Adrenal gland (tissue), 19 donors: ENCODE measurements at regions of chr11 and their contacts with region 1.

Region 1: GRCh38 chr11:32792948-32793475 is 1.4 kb downstream of the CCDC73 start:
- DNase-seq: peak; percentile 25 to 83 (median 53)
- H3K4me3 ChIP-seq: peak overlapping the region in 1 of 4 donors; percentile 37
- H3K27ac ChIP-seq: no peak overlapping the region
- H3K4me1 ChIP-seq: peaks cover 0 to 7% of the 10 kb centered on the region in 2 donors
- H3K27me3 ChIP-seq: no peaks in the 10 kb centered on the region
- CTCF ChIP-seq: peak; percentile 63 to 81 (median 72)
- POLR2A ChIP-seq: no peak

Region 2: GRCh38 chr11:32323814-32324130 is 469.2 kb before region 1 on chr11:
- intact Hi-C with region 1: loop called in 1 of 2 experiments (anchors 5 kb)
- DNase-seq: no peak
- H3K4me3 ChIP-seq: no peak overlapping the region
- H3K27ac ChIP-seq: no peak overlapping the region
- H3K4me1 ChIP-seq: no peaks in the 10 kb centered on the region
- H3K27me3 ChIP-seq: peaks cover 4% of the 10 kb centered on the region
- CTCF ChIP-seq: no peak
- POLR2A ChIP-seq: no peak